Astrocyte of the cerebellum (primary cell): ENCODE measurements at regions of chr2 and their contacts with region 1.

Region 1: GRCh38 chr2:109644576-109645275 is 30.6 kb downstream of the SOWAHC start:
- DNase-seq: no peak
- H3K4me3 ChIP-seq: no peak overlapping the region
- CTCF ChIP-seq: no peak

Region 2: DNA sequence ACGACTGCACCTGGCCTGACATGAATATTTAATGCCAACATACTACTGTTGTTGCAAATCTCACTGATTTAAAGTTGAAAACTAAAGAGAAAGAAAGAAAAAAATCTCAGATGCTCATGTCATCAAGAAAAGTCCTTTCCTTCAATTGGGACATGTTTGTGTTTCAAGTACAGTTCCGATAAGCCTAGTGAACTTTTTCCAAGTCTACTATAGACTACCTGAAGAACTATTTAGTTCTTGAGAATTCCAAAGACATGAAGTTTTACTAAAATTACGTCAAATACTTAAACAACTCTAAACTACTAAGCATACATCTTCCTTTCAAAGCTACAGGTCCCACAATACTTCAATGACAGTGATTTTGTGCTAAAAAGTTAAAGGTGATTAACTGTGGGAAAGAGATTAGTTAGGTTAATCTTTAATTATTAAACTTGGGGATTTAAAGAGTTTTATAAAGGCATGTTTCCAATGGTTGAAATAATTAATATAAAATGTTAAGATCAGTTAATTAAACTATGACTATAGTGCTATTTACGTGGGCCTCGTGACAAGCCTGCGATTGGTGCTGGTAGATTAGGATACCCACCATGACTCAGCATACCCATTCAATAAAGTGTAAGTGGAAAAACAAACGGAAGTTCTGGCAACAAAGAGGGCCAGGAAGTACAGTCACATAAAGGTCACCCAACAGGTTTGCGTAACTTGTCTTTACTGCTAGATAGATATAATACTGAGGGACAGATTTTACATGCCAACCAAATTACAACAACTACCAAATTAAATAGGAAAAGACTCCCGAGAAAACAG is 86.4 kb before region 1 on chr2:
- in situ Hi-C with region 1: loop called (anchors 5 kb)
- DNase-seq: peak; percentile 26
- H3K4me3 ChIP-seq: no peak overlapping the region
- CTCF ChIP-seq: no peak

Region 3: GRCh38 chr2:109609352-109610024 is 35.2 kb before region 1 on chr2:
- in situ Hi-C with region 1: loop called (anchors 5 kb)
- DNase-seq: peak; percentile 49
- H3K4me3 ChIP-seq: peak overlapping the region; percentile 17
- CTCF ChIP-seq: no peak

Region 4: DNA sequence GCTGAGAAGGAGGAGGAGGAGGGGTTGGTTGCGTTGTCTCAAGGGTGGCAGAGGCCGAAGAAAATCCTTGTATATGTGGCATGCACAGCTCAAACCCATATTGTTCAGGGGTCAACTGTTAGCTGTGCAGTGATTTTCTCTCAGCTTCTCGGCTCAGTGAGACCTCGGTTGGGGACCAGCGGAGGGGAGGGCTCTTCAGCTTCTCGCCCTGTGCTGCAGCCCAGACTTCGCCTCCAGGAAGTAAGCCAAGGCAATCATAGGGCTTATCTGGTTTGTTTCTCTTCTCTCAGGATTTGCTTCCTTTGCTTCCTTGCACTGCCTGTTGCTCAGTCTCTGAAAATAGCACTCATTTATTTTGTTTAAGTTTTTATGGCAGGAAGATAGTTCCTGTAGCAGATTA is 54.9 kb after region 1 on chr2:
- in situ Hi-C with region 1: loop called (anchors 5 kb)
- DNase-seq: no peak
- H3K4me3 ChIP-seq: no peak overlapping the region
- CTCF ChIP-seq: no peak

Region 5: DNA sequence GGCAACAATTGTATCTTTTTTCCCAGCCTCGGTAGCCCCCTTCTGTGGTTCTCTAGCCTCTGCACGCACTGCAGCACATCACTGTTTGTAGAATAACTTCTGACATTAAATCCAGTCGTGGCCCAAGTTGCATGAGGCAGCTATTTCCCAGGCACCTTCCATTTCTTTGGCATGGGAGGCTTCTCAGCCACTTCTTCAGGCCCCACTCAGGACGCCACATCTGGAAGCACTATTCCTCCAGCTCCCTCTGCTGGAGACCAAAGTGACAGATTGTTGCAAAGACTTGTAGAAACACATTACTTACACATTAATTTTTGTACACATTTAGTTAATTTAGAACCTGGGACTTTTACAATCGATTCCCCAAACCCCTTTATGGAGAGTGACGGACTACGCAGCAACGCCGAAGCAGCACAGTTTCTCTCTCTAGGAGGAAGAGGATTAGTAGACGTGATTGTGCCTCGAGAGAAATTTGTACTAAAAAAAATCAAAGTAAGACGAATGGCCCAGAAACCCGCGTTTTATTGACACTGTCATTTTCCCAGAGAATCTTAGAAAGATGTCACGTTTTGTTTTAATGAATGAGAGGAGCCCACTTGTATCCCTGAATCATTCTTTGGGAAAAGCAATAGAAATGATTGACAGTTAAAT is 91.6 kb after region 1 on chr2:
- in situ Hi-C with region 1: no loop called
- DNase-seq: peak; percentile 48
- H3K4me3 ChIP-seq: no peak overlapping the region
- CTCF ChIP-seq: peak; percentile 77